Mammary epithelial cell (primary cell): ENCODE measurements at regions of chr19 and their contacts with region 1.

Region 1: GRCh38 chr19:57559404-57560025 is at the start of gene ZNF550:
- DNase-seq: peak; percentile 85
- H3K4me3 ChIP-seq: peak within 1 kb of the TSS; percentile 82 to 97 (median 96)
- H3K27ac ChIP-seq: peak within 1 kb of the TSS; percentile 14
- H3K4me1 ChIP-seq: peaks cover 13% of the 10 kb centered on the region
- H3K27me3 ChIP-seq: no peaks in the 10 kb centered on the region
- CTCF ChIP-seq: no peak
- total RNA-seq, gene ZNF550: 6.8 to 9.1 TPM

Region 2: DNA sequence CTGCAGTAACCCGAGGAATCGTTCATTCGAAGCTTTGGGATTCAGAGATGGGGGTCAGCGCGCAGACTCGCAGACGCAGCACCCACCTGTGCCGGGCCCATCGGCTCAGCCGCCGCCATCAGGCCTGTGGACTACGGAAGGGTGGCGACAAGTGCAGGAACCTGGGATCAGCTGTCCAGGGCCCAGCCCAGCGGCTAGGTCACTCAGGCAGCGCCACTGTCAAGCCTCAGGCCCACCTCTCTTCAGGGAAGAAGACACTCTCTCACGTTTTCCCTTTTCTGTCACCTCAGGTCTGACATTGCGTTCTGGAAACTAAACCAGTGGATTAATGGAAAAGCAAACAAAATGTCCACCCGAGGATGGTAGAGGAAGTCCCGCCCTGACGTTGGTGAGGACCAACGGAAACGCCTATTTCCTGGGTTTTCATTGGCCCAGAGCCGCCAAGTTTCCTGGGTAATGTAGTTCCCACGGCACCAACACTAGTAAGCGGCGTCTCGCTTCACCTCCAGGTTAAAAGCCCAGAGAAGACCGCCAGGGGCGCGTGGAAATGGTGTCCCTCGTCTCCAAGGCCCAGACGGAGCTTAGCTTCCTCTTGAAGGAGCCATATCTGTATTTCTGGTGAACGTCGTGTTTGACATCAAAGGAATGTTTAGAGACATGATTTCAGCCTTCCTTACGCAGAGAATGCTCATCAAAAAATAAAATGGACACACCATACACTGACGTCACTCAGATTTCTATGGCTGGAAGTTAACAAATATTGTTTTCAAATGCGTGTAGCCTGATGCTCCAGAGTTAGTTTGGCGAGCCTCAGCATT is 82.1 kb before region 1 on chr19 and contains the start of gene ZNF772:
- CTCF ChIA-PET with region 1: no interaction called
- dilution Hi-C with region 1: no loop called
- in situ Hi-C with region 1: no loop called
- intact Hi-C with region 1: loop called (anchors 2 kb)
- DNase-seq: peak; percentile 91
- H3K4me3 ChIP-seq: peak within 1 kb of the TSS; percentile 50 to 78 (median 66)
- H3K27ac ChIP-seq: no peak within 1 kb of the TSS
- H3K4me1 ChIP-seq: peaks cover 7% of the 10 kb centered on the region
- H3K27me3 ChIP-seq: no peaks in the 10 kb centered on the region
- CTCF ChIP-seq: peak; percentile 45 to 47
- total RNA-seq, gene ZNF772: 11.7 to 15.0 TPM

Region 3: GRCh38 chr19:57527136-57527881 is 32.2 kb before region 1 on chr19 and contains the start of gene ZNF549:
- CTCF ChIA-PET with region 1: no interaction called
- dilution Hi-C with region 1: no loop called
- in situ Hi-C with region 1: no loop called
- intact Hi-C with region 1: loop called (anchors 1 kb)
- DNase-seq: peak; percentile 96
- H3K4me3 ChIP-seq: peak within 1 kb of the TSS; percentile 61 to 77 (median 70)
- H3K27ac ChIP-seq: peak within 1 kb of the TSS; percentile 3
- H3K4me1 ChIP-seq: no peaks in the 10 kb centered on the region
- H3K27me3 ChIP-seq: no peaks in the 10 kb centered on the region
- CTCF ChIP-seq: no peak
- total RNA-seq, gene ZNF549: 6.1 to 7.0 TPM

Region 4: GRCh38 chr19:57578487-57579205 is 19.1 kb after region 1 on chr19 and contains the start of gene ZNF416:
- CTCF ChIA-PET with region 1: no interaction called
- dilution Hi-C with region 1: no loop called
- in situ Hi-C with region 1: no loop called
- intact Hi-C with region 1: loop called (anchors 1 kb)
- DNase-seq: peak; percentile 97
- H3K4me3 ChIP-seq: peak within 1 kb of the TSS; percentile 80 to 90 (median 84)
- H3K27ac ChIP-seq: peak within 1 kb of the TSS; percentile 28
- H3K4me1 ChIP-seq: peaks cover 3% of the 10 kb centered on the region
- H3K27me3 ChIP-seq: no peaks in the 10 kb centered on the region
- CTCF ChIP-seq: peak in 1 of 2 donors; percentile 32
- total RNA-seq, gene ZNF416: 5.3 to 6.3 TPM

Region 5: GRCh38 chr19:57719901-57720519 is 160.5 kb after region 1 on chr19:
- CTCF ChIA-PET with region 1: no interaction called
- dilution Hi-C with region 1: no loop called
- in situ Hi-C with region 1: no loop called
- intact Hi-C with region 1: loop called (anchors 5 kb)
- DNase-seq: no peak
- H3K4me3 ChIP-seq: no peak overlapping the region
- H3K27ac ChIP-seq: no peak overlapping the region
- H3K4me1 ChIP-seq: no peaks in the 10 kb centered on the region
- H3K27me3 ChIP-seq: no peaks in the 10 kb centered on the region
- CTCF ChIP-seq: no peak